Right ventricle myocardium inferior (tissue), 1 donor: ENCODE measurements at regions of chr20 and their contacts with region 1.

Region 1: DNA sequence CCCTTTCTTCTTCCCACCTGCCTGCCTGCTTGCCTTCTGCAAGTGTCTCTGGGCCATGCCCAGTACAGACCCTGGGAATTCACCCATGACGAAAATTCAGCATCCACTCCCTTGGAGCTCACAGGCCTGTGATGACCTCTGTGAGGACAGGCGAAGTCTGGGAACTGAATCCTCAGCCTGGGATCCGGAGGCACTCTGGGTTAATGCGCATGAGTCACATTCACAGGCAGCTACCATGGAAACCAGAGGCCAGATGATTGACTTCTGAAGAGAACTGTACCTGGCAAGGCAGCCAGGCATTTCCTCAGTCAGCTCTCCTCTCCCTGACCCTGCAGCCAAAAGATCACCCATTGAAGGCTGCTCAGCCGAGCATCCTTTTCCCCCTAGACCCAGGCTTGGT is 41.0 kb downstream of the SLC9A8 start:
- DNase-seq: no peak
- ATAC-seq: no peak

Region 2: GRCh38 chr20:49541733-49542513 is 311.7 kb before region 1 on chr20:
- intact Hi-C with region 1: loop called (anchors 10 kb)
- DNase-seq: peak; percentile 80
- ATAC-seq: peak; percentile 73

Region 3: GRCh38 chr20:49821870-49822331 is 31.7 kb before region 1 on chr20:
- intact Hi-C with region 1: no loop called
- DNase-seq: no peak
- ATAC-seq: peak; percentile 62

Region 4: DNA sequence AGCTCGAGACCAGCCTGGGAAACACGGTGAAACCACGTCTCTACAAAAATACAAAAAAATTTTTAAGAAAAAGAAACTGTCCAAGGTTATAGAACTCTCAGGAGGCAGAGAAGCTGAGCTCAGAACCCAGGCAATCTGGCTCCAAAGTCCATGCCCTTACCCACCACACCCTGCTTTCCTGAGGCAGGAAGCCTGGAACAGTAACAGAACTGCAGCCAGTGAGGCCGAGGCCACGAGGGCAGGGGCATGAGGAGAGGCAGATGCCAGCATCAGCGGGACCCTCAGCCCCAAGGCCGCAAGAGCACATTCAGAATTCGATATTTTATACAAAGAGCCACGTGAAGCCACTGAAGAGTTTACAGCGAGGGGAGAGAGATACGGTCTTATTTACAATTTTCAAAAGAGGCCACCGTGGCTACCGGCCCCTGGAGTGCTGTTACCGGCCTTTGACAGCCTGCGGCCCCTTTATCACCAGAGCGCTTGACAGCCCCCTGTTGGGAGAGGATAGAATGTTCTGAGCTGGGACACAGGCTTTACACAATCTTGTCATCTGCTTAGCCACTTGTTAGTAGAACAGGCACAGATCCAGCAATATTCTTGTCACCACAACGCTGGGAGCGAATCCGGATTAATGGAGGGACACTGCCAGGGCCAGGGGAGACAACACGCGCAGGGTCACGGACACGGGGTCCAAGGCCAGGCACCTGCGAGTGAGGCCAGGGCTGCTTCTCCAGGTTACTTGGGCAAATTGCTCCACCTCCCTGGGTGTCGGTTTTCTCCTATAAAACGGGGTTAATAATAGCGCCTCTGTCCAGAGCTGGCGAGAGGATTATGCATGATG is 56.1 kb after region 1 on chr20:
- intact Hi-C with region 1: loop called (anchors 2 kb)
- DNase-seq: no peak
- ATAC-seq: peak; percentile 74